Activated T-helper 1 cell treated with anti-CD3 and anti-CD28 coated beads, Interleukin-12 subunit alpha, Interleukin-12 subunit beta, Interleukin-2, Interleukin-4 antibody, amounts not matched to agents 30 ng/mL and 10 ng/mL and 1 ng/mL, durations not matched to agents 14 hours and 24 hours and 36 hours (primary cell): ENCODE measurements at regions of chr1 and their contacts with region 1.

Region 1: DNA sequence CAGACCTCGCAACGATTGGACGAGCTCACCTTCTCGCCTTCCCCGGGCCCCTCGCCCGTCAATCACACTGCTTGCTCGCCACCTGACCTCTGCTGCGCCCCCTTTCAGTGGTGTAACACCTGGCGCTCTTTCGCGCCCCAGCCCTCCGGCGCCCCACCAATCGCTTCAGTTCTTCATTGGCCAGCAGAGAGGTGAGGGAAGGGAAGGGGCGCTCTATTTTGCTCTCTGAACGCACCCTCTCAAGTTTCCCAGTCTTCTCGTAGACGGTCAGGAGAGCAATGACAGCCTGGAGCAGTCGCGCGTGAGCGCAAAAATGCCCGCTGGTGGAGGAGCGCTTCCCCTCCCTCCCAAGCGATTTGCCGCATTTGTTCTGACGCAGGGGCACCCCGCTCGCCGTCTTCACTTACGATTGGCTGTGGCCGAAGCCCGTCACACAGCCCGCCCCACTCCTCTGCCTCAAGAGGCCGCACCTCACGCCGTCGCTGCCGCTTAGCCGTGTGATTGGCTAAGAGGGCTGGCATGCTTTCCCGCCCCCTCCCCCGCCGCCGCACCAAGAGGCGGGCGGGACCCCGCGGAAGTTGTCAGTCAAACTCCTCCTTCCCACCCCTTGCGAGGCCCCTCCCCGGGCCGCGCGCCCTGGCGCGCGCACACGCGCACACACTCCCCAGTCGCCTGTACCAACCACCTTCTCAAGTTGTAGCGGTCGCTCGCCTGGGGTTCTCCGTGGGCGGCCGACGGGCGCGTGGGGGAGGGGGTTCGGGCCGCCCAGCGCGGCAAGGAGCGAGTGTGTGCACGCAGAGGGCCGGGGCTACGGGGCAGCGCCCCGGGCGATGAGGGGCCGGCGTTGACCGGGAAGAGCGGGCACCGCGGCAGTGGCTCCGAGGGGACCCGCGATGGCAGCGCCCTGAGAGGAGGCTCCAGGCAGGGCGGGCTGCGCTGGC is at the start of gene PPP2R5A:
- DNase-seq: peak; percentile 99
- H3K4me3 Mint-ChIP-seq: peak within 1 kb of the TSS; percentile 97
- H3K27ac Mint-ChIP-seq: peak within 1 kb of the TSS; percentile 99
- H3K4me1 Mint-ChIP-seq: peaks cover 50% of the 10 kb centered on the region
- H3K27me3 Mint-ChIP-seq: peaks cover 3% of the 10 kb centered on the region
- total RNA-seq, gene PPP2R5A: 46.4 and 53.7 TPM in 2 replicates

Region 2: GRCh38 chr1:211675230-211676105 is 609.5 kb before region 1 on chr1 and contains the start of gene NEK2:
- intact Hi-C with region 1: loop called (anchors 2 kb)
- DNase-seq: peak; percentile 87
- H3K4me3 Mint-ChIP-seq: peak within 1 kb of the TSS; percentile 95
- H3K27ac Mint-ChIP-seq: peak within 1 kb of the TSS; percentile 80
- H3K4me1 Mint-ChIP-seq: peaks cover 42% of the 10 kb centered on the region
- H3K27me3 Mint-ChIP-seq: no peaks in the 10 kb centered on the region
- total RNA-seq, gene NEK2: 13.9 and 18.9 TPM in 2 replicates

Region 3: DNA sequence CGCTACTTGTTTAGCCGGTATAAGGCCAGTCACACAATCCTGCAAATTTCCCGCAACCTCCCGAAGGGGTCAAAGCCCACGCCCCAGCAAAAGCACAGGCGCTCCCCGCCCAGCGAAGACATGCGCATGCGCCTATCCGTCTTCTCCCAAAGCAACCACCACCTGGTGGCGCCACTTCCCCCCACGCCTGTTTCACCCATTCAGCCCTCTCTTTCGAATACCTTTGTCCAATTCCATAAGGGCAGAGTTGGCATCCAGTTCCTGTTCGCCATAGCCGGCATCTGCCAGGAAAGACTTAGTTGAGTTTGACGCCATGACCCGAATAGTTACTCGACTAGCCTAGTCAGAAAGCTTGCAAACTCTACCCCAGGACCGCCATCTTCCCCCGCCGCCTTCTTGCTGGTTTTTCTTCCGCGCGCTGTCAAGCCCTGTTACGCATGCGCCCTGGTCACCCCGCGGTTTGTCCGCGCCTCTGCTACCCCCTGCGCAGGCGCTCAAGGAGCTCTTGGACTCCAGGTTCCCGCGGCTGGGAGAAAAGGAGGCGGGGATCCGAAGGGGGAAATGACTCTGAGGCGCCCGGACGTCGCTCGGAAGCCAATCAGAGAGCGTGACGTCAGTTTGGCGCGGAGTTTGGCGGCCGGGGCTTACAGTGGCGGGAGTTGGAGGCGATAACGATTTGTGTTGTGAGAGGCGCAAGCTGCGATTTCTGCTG is 249.7 kb before region 1 on chr1 and contains the starts of genes DTL and INTS7:
- intact Hi-C with region 1: loop called (anchors 1 kb)
- DNase-seq: peak; percentile 99
- H3K4me3 Mint-ChIP-seq: peak within 1 kb of the TSS; percentile 95
- H3K27ac Mint-ChIP-seq: peak within 1 kb of the TSS; percentile 94
- H3K4me1 Mint-ChIP-seq: peaks cover 74% of the 10 kb centered on the region
- H3K27me3 Mint-ChIP-seq: peaks cover 3% of the 10 kb centered on the region
- total RNA-seq, gene DTL: 91.0 and 94.8 TPM in 2 replicates
- total RNA-seq, gene INTS7: 33.2 and 33.8 TPM in 2 replicates

Region 4: GRCh38 chr1:212225871-212226302 is 59.1 kb before region 1 on chr1:
- intact Hi-C with region 1: loop called (anchors 1 kb)
- DNase-seq: no peak
- H3K4me3 Mint-ChIP-seq: peak overlapping the region; percentile 69
- H3K27ac Mint-ChIP-seq: peak overlapping the region; percentile 96
- H3K4me1 Mint-ChIP-seq: peaks cover 50% of the 10 kb centered on the region
- H3K27me3 Mint-ChIP-seq: no peaks in the 10 kb centered on the region

Region 5: GRCh38 chr1:212315907-212316306 is 30.9 kb after region 1 on chr1:
- intact Hi-C with region 1: loop called (anchors 1 kb)
- DNase-seq: no peak
- H3K4me3 Mint-ChIP-seq: no peak overlapping the region
- H3K27ac Mint-ChIP-seq: no peak overlapping the region
- H3K4me1 Mint-ChIP-seq: peaks cover 24% of the 10 kb centered on the region
- H3K27me3 Mint-ChIP-seq: no peaks in the 10 kb centered on the region

Region 6: DNA sequence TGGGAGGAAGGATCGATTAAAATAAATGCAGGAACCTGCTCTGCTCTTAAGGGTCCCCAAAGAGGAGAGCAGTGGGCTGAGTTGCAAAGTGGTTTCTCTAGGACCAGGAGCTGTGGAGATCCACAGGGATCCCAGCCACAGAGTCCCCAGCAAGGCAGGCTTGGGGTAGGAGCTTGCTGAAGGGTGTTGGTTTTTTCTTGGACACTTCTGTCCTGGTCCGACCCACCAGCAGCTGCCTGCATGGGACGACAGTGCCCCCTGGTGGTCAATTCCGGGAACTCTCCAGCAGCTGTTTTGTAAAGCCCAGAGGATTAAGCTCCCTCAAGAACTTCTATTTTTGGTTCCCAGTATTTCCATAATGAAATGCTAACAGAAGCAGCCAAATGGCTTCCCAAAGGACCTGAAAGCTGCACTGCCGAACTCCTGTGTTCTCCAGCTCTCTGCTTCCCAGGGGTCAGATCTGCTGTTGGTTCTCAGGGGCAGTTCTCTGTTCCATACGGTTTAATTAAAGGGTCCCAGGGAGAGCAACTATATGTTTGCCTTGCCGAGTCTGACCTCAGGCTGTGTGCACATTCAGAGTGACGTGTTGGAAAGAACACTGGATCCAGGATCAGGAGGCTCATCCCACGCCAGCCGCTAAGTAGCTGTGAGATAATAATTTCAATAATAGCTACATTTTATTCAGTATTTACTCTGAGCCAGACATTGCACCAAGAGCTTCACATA is 171.0 kb after region 1 on chr1:
- intact Hi-C with region 1: loop called (anchors 5 kb)
- DNase-seq: peak; percentile 73
- H3K4me3 Mint-ChIP-seq: no peak overlapping the region
- H3K27ac Mint-ChIP-seq: no peak overlapping the region
- H3K4me1 Mint-ChIP-seq: peaks cover 12% of the 10 kb centered on the region
- H3K27me3 Mint-ChIP-seq: peaks cover 1% of the 10 kb centered on the region